MCF 10A (cell line): ENCODE measurements at regions of chr3 and their contacts with region 1.

Region 1: DNA sequence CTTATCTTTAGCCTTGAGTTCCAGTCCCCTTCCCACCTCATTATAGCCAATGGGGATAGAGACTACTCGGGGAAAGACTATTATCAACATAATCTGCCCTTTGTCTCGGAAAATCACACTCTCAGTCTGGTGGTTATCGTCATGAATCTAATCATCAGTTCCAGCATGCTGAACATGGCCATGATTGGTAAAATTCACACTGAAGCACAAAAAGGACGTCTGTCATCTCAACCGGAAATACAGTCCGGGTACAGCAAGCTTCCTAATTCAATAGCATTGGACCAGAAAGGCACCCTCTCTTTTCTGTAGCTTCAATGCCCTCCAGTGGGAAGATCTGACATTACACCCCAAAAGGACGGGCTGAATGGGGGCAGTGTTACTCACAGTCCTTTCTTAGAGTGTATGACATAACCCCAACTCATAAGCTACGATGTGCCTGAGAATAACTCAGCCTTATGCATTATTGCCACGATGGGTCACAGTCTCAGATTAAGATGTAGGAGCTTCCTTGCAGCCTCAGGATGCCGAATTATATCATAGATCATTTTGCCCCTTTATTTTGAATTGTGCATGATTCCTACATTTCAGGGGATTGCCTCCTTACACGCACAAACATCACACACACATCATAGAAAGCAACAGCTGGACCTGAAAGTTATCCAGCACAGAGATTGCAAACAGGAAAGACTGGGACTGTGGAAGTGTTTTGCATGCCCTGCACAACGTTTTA is 390.4 kb upstream of the LMCD1 start:
- DNase-seq: peak; percentile 72
- H3K4me3 Mint-ChIP-seq: no peak overlapping the region
- H3K27ac Mint-ChIP-seq: no peak overlapping the region
- H3K4me1 Mint-ChIP-seq: peaks cover 6% of the 10 kb centered on the region
- H3K27me3 Mint-ChIP-seq: no peaks in the 10 kb centered on the region
- CTCF ChIP-seq: peak; percentile 87

Region 2: GRCh38 chr3:6807967-6808588 is 1303.2 kb before region 1 on chr3:
- CTCF ChIA-PET with region 1: interaction called, 4 read pairs
- POLR2A ChIA-PET with region 1: no interaction called
- intact Hi-C with region 1: loop called (anchors 5 kb)
- DNase-seq: peak; percentile 71
- H3K4me3 Mint-ChIP-seq: no peak overlapping the region
- H3K27ac Mint-ChIP-seq: no peak overlapping the region
- H3K4me1 Mint-ChIP-seq: peaks cover 16% of the 10 kb centered on the region
- H3K27me3 Mint-ChIP-seq: no peaks in the 10 kb centered on the region
- CTCF ChIP-seq: no peak

Region 3: DNA sequence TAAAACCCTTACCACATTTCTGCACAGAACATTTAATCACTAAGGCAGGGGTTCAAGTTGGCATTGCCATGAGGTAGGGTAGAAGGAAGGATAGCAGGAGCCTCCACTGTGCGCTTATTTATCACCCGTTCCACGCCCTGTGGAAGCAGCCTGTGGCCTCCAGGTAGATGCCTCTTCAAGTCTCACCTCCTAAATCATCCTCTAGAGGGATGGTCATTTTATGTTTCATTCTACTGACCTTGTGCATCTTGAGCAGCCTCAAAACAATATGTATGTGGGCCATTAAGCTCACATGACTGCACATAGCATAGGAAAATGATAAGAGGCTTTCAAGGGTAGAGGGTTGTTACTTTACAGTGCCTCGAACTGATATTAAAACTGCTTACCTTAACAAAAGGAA is 704.1 kb before region 1 on chr3:
- CTCF ChIA-PET with region 1: no interaction called
- POLR2A ChIA-PET with region 1: no interaction called
- intact Hi-C with region 1: loop called (anchors 10 kb)
- DNase-seq: peak; percentile 11
- H3K4me3 Mint-ChIP-seq: no peak overlapping the region
- H3K27ac Mint-ChIP-seq: no peak overlapping the region
- H3K4me1 Mint-ChIP-seq: peaks cover 7% of the 10 kb centered on the region
- H3K27me3 Mint-ChIP-seq: no peaks in the 10 kb centered on the region
- CTCF ChIP-seq: no peak

Region 4: DNA sequence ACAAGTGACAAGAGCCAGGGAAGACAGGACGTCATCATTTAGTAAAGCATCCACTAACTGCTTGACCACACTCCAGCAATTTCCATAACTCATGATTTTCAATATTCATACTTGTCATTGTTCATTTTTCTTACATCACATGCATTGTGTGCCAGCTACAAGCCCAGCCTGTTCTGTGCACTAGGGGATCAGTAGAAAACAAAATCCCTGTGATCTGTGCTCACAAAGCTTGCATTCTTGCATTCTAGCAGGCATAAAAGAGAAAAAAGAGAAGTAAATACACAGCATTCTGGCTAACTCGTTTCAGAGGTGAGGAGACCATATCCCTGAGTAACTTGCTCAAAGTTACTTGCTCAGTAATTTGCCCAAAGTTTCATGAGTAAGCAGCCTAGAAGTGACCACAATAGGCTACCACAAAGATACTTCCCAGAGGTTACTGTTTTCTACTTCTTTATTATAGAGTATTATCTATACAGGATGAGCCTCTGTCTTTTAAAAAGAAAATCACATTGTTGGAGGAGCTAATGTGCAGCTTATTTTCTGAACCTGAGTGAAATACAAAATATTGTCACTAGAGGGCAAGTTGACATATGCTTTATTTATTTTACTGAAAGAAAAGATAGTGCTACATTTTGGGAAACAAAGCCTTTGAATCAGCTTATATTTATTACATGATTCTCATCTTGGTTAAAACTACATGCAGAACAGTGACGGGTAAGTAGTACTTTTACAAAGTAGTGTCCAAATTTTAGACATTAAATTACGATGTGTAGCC is 311.0 kb before region 1 on chr3:
- CTCF ChIA-PET with region 1: interaction called, 5 read pairs
- POLR2A ChIA-PET with region 1: no interaction called
- intact Hi-C with region 1: loop called (anchors 1 kb)
- DNase-seq: peak; percentile 4
- H3K4me3 Mint-ChIP-seq: no peak overlapping the region
- H3K27ac Mint-ChIP-seq: peak overlapping the region; percentile 35
- H3K4me1 Mint-ChIP-seq: peaks cover 7% of the 10 kb centered on the region
- H3K27me3 Mint-ChIP-seq: no peaks in the 10 kb centered on the region
- CTCF ChIP-seq: peak; percentile 37

Region 5: GRCh38 chr3:8301728-8302462 is 190.7 kb after region 1 on chr3:
- CTCF ChIA-PET with region 1: interaction called, 12 read pairs
- POLR2A ChIA-PET with region 1: no interaction called
- intact Hi-C with region 1: loop called (anchors 1 kb)
- DNase-seq: peak; percentile 63
- H3K4me3 Mint-ChIP-seq: no peak overlapping the region
- H3K27ac Mint-ChIP-seq: no peak overlapping the region
- H3K4me1 Mint-ChIP-seq: no peaks in the 10 kb centered on the region
- H3K27me3 Mint-ChIP-seq: no peaks in the 10 kb centered on the region
- CTCF ChIP-seq: peak; percentile 75